Endothelial cell of umbilical vein (primary cell): ENCODE measurements at regions of chr15 and their contacts with region 1.

Region 1: DNA sequence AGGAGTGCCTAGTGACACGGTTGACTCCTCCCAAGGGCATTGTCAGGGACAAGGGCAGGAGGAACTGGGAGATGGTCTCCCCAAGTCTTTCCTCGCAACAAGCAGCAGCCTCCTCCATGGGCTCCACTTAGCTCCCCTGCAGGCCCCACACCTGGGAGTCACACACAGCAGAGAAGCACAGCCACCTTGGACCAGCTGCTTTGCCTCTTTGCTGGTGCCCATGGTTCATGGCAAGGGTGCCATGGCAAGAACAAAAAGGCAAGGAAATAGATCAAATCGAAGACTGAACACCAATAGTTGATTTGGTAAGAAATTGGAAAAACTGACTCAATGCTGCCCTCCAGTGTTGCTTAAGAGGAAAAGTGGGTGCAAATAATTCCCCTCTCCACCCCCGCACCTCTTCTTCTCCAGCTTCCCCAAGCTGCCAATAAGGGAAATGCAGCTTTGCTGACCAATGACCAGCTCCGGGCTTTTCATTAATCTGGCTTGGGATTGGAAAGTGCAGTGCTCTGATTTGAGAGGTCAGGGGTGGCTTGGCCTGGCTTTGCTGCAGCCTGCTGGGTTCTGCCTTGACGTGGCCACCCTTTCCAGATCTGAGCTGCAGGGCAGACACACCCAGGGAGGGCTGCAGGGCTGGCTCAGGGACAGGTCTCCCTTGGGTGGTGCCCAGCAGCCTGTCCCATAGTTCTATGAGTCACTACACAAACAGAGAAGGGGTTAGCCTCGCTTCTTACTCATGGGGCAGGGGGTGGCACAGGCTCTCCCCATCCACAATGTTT is 162.0 kb downstream of the KLF13 start:
- DNase-seq: peak; percentile 81
- H3K4me3 ChIP-seq: no peak overlapping the region
- H3K27ac ChIP-seq: no peak overlapping the region
- H3K4me1 ChIP-seq: peaks cover 5% of the 10 kb centered on the region
- H3K27me3 ChIP-seq: peaks cover 13 to 18% of the 10 kb centered on the region in 2 experiments
- CTCF ChIP-seq: peak; percentile 84 to 90
- POLR2A ChIP-seq: no peak

Region 2: GRCh38 chr15:31049682-31050615 is 438.7 kb before region 1 on chr15:
- CTCF ChIA-PET with region 1: no interaction called
- POLR2A ChIA-PET with region 1: no interaction called
- dilution Hi-C with region 1: no loop called
- intact Hi-C with region 1: no loop called
- DNase-seq: no peak
- H3K4me3 ChIP-seq: no peak overlapping the region
- H3K27ac ChIP-seq: no peak overlapping the region
- H3K4me1 ChIP-seq: no peaks in the 10 kb centered on the region
- H3K27me3 ChIP-seq: no peaks in the 10 kb centered on the region
- CTCF ChIP-seq: no peak
- POLR2A ChIP-seq: no peak

Region 3: GRCh38 chr15:31206386-31206785 is 282.2 kb before region 1 on chr15:
- CTCF ChIA-PET with region 1: interaction called, 155 read pairs
- POLR2A ChIA-PET with region 1: no interaction called
- dilution Hi-C with region 1: loop called (anchors 25 kb)
- intact Hi-C with region 1: no loop called
- DNase-seq: no peak
- H3K4me3 ChIP-seq: no peak overlapping the region
- H3K27ac ChIP-seq: no peak overlapping the region
- H3K4me1 ChIP-seq: no peaks in the 10 kb centered on the region
- H3K27me3 ChIP-seq: peaks cover 5 to 10% of the 10 kb centered on the region in 2 experiments
- CTCF ChIP-seq: peak in 1 of 2 donors; percentile 13
- POLR2A ChIP-seq: no peak

Region 4: GRCh38 chr15:31236184-31237042 is 252.2 kb before region 1 on chr15:
- CTCF ChIA-PET with region 1: interaction called, 12 read pairs
- POLR2A ChIA-PET with region 1: no interaction called
- dilution Hi-C with region 1: no loop called
- intact Hi-C with region 1: no loop called
- DNase-seq: peak; percentile 81
- H3K4me3 ChIP-seq: no peak overlapping the region
- H3K27ac ChIP-seq: no peak overlapping the region
- H3K4me1 ChIP-seq: no peaks in the 10 kb centered on the region
- H3K27me3 ChIP-seq: no peaks in the 10 kb centered on the region
- CTCF ChIP-seq: peak in 1 of 2 donors; percentile 4
- POLR2A ChIP-seq: no peak

Region 5: GRCh38 chr15:31396881-31397560 is 91.6 kb before region 1 on chr15:
- CTCF ChIA-PET with region 1: interaction called, 4 read pairs
- POLR2A ChIA-PET with region 1: no interaction called
- dilution Hi-C with region 1: no loop called
- intact Hi-C with region 1: loop called (anchors 2 kb)
- DNase-seq: peak; percentile 67
- H3K4me3 ChIP-seq: no peak overlapping the region
- H3K27ac ChIP-seq: peak overlapping the region; percentile 38
- H3K4me1 ChIP-seq: peaks cover 20% of the 10 kb centered on the region
- H3K27me3 ChIP-seq: no peaks in the 10 kb centered on the region
- CTCF ChIP-seq: no peak
- POLR2A ChIP-seq: no peak

Region 6: DNA sequence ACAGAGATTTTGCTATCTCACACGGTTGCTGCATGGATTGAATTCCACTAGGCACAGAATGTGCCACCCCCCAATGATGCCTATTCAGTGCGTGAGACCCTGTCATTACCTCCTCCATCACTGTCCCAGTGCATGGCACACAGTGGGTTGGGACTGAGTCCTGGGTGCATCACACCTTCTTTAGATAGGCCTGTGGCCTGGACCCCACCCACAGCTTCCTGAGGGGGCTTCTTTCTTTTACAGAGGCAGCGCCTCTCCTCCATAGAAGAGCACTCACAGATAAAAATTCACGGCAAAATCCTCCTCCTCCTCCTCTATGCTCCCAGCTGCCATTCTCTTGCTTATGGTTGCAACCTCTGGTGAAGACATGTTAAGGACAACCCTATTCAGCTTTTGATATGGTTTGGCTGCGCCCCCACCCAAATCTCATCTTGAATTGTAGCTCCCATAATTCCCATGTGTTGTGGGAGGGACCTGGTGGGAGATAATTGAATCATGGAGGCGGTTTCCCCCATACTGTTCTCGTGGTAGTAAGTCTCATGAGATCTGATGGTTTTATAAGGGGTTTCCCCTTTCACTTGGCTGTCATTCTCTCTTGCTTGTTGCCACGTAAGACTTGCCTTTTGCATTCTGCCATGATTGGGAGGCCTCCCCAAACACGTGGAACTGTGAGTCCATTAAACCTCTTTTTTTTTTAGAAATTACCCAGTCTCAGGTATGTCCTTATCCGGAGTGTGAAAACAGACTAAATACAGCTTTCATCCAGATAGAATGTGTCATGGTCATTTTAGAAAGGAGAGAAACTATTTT is 14.4 kb before region 1 on chr15:
- CTCF ChIA-PET with region 1: interaction called, 14 read pairs
- POLR2A ChIA-PET with region 1: no interaction called
- dilution Hi-C with region 1: no loop called
- intact Hi-C with region 1: no loop called
- DNase-seq: no peak
- H3K4me3 ChIP-seq: no peak overlapping the region
- H3K27ac ChIP-seq: no peak overlapping the region
- H3K4me1 ChIP-seq: no peaks in the 10 kb centered on the region
- H3K27me3 ChIP-seq: peaks cover 2 to 5% of the 10 kb centered on the region in 2 experiments
- CTCF ChIP-seq: no peak
- POLR2A ChIP-seq: no peak

Region 7: GRCh38 chr15:32033186-32033890 is 544.7 kb after region 1 on chr15:
- CTCF ChIA-PET with region 1: no interaction called
- POLR2A ChIA-PET with region 1: no interaction called
- dilution Hi-C with region 1: no loop called
- intact Hi-C with region 1: no loop called
- DNase-seq: no peak
- H3K4me3 ChIP-seq: no peak overlapping the region
- H3K27ac ChIP-seq: no peak overlapping the region
- H3K4me1 ChIP-seq: no peaks in the 10 kb centered on the region
- H3K27me3 ChIP-seq: peaks cover 26 to 28% of the 10 kb centered on the region in 2 experiments
- CTCF ChIP-seq: no peak
- POLR2A ChIP-seq: no peak